PC-3 (cell line): ENCODE measurements at regions of chr1 and their contacts with region 1.

Region 1: DNA sequence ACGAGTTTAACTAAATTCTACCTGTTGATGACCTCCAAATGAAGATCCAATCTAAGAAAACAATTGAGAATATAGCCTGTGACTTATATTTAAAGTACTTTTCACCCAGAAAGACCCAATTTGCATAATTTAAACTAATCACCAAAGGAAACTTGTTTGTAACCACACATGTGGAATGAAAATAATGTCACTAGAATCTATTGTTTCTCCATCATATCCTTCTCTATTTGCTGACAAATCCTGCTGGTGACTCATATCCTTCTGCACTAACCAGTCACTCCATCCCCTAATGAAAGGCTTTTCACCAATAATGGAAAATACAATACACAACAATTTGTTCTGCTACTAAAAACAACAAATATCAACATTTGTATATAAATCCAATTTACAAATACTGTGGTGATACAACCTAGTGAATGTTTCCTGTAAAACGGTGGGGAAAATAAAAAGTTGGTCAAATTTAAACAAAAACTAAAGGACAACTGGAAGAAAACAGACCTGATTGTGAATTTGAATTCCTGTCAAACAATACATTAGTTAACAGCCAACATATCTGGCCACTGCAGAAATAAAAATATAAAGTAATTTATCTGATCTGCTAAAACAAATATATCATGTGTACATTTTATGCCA is 6.5 kb downstream of the PTP4A2 start:
- DNase-seq: peak; percentile 70
- ATAC-seq: peak; percentile 49
- H3K4me3 ChIP-seq: peak overlapping the region; percentile 34
- H3K27ac ChIP-seq: peak overlapping the region; percentile 98
- H3K4me1 ChIP-seq: peaks cover 71% of the 10 kb centered on the region
- H3K27me3 ChIP-seq: no peaks in the 10 kb centered on the region
- CTCF ChIP-seq: no peak

Region 2: GRCh38 chr1:31831397-31832378 is 100.0 kb before region 1 on chr1:
- CTCF ChIA-PET with region 1: no interaction called
- POLR2A ChIA-PET with region 1: no interaction called
- intact Hi-C with region 1: no loop called
- DNase-seq: peak; percentile 23
- ATAC-seq: no peak; the same call in 1 of the 2 replicates
- H3K4me3 ChIP-seq: no peak overlapping the region
- H3K27ac ChIP-seq: no peak overlapping the region
- H3K4me1 ChIP-seq: no peaks in the 10 kb centered on the region
- H3K27me3 ChIP-seq: no peaks in the 10 kb centered on the region
- CTCF ChIP-seq: no peak

Region 3: DNA sequence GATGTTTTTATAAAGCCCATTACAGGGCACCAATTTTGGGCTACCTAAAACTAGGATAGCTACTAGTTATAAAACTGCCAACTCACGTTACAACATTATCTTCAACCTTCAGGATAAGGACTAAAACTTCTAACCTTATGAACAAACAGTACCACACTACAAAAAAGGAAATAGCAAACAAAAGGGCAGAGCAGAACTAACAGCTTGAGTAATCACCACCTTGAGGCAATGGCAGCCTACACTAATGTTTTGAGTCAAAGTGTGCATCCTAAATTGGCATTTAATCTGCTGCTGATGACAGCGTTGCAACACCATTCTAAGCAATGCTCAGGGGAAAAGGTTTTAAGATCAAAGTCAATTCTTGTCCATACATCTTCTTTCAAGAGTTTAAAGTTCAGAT is 20.8 kb before region 1 on chr1:
- CTCF ChIA-PET with region 1: no interaction called
- POLR2A ChIA-PET with region 1: interaction called, 4 read pairs
- intact Hi-C with region 1: loop called (anchors 2 kb)
- DNase-seq: no peak
- ATAC-seq: peak; percentile 38
- H3K4me3 ChIP-seq: no peak overlapping the region
- H3K27ac ChIP-seq: no peak overlapping the region
- H3K4me1 ChIP-seq: no peaks in the 10 kb centered on the region
- H3K27me3 ChIP-seq: no peaks in the 10 kb centered on the region
- CTCF ChIP-seq: no peak

Region 4: GRCh38 chr1:32172621-32173245 is 241.0 kb after region 1 on chr1:
- CTCF ChIA-PET with region 1: no interaction called
- POLR2A ChIA-PET with region 1: interaction called, 12 read pairs
- intact Hi-C with region 1: no loop called
- DNase-seq: peak; percentile 31
- ATAC-seq: peak; percentile 59; the same call in 1 of the 2 replicates
- H3K4me3 ChIP-seq: no peak overlapping the region
- H3K27ac ChIP-seq: no peak overlapping the region
- H3K4me1 ChIP-seq: peaks cover 11% of the 10 kb centered on the region; the same call in 1 of the 2 replicates
- H3K27me3 ChIP-seq: no peaks in the 10 kb centered on the region
- CTCF ChIP-seq: no peak